Heart left ventricle (tissue), 16 donors: ENCODE measurements at regions of chr20 and their contacts with region 1.

Region 1: GRCh38 chr20:53413186-53413631 is 180.4 kb downstream of the ZNF217 start:
- DNase-seq: peak in 1 of 5 donors; percentile 66
- ATAC-seq: peak in 1 of 4 donors; percentile 11
- H3K4me3 ChIP-seq: no peak overlapping the region
- H3K27ac ChIP-seq: no peak overlapping the region
- H3K4me1 ChIP-seq: peaks cover 0 to 17% (median 6%) of the 10 kb centered on the region in 12 donors
- H3K27me3 ChIP-seq: no peaks in the 10 kb centered on the region
- CTCF ChIP-seq: peak in 2 of 12 donors; percentile 9 to 11
- POLR2A ChIP-seq: no peak

Region 2: GRCh38 chr20:52965380-52965779 is 447.8 kb before region 1 on chr20:
- intact Hi-C with region 1: loop called in 1 of 10 experiments (anchors 10 kb)
- DNase-seq: no peak
- ATAC-seq: no peak
- H3K4me3 ChIP-seq: no peak overlapping the region
- H3K27ac ChIP-seq: no peak overlapping the region
- H3K4me1 ChIP-seq: no peaks in the 10 kb centered on the region
- H3K27me3 ChIP-seq: peaks cover 0 to 7% (median 0%) of the 10 kb centered on the region in 9 donors
- CTCF ChIP-seq: no peak
- POLR2A ChIP-seq: no peak

Region 3: DNA sequence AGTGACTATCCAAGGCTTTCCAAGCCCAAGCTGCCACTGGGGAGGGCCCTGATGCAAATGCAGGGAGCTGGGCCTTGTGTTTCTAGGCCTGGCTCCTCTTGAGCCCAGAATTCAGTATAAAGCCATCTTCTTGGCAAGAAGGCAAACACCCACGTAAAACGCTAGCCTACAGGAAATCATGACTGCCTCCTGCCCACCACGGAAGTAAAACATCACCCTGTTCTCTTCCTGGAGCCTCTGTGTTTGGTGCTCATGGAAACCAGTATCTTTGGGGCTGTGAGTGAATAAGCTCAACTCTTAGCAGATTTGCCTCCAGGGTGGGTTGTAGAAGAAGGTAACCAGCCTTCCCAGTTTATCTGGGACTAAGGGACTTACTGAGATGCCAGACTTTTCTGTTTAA is 90.6 kb before region 1 on chr20:
- intact Hi-C with region 1: no loop called
- DNase-seq: no peak
- ATAC-seq: no peak
- H3K4me3 ChIP-seq: no peak overlapping the region
- H3K27ac ChIP-seq: no peak overlapping the region
- H3K4me1 ChIP-seq: no peaks in the 10 kb centered on the region
- H3K27me3 ChIP-seq: no peaks in the 10 kb centered on the region
- CTCF ChIP-seq: no peak
- POLR2A ChIP-seq: no peak

Region 4: DNA sequence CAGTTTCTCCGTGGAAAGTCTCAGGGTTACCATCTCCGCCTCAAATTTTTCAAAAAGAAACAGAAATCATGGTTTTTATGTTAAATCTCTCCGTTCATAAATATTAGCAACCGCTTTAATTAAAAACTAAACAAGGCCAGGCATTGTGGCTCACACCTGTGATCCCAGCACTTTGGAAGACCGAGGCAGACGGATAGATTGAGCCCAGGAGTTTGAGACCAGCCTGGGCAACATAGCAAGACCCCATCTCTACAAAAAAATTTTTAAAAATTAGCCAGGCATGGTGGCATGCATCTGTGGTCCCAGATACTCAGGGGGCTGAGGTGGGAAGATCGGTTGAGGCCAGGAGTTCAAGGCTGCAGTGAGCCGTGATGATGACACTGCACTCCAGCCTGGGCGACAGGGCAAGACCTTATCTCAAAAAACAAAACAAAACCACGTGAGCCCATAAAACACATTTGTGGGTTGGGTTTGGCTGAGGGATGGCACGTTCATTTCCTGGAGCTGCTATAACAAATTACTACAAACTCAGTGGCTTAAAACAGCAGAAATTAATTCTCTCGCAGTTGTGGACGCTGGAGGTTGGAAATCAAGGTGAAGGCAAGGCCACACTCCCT is 42.8 kb before region 1 on chr20:
- intact Hi-C with region 1: loop called in 1 of 10 experiments (anchors 5 kb)
- DNase-seq: no peak
- ATAC-seq: no peak
- H3K4me3 ChIP-seq: no peak overlapping the region
- H3K27ac ChIP-seq: no peak overlapping the region
- H3K4me1 ChIP-seq: peaks cover 0 to 4% (median 0%) of the 10 kb centered on the region in 12 donors
- H3K27me3 ChIP-seq: no peaks in the 10 kb centered on the region
- CTCF ChIP-seq: no peak
- POLR2A ChIP-seq: no peak

Region 5: DNA sequence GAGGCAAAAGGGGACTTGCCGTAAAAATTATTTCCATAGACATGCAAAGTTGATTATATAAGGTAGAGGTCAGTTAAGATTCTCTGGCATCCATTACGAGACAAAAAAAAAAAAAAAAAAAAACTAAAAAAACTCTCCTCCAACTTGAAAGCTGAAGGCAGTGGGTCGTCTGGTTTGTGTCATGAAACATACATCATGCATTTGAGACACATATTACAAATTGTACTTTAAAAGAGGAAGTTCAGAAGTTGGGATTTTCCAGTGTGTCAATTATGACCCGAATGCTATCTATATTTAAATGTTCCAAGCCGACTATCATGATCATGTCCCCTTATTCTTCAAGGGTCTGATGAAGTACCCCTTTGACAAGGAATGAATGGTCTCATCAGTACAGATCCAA is 55.4 kb after region 1 on chr20:
- intact Hi-C with region 1: loop called in 1 of 10 experiments (anchors 10 kb)
- DNase-seq: no peak
- ATAC-seq: no peak
- H3K4me3 ChIP-seq: no peak overlapping the region
- H3K27ac ChIP-seq: no peak overlapping the region
- H3K4me1 ChIP-seq: no peaks in the 10 kb centered on the region
- H3K27me3 ChIP-seq: no peaks in the 10 kb centered on the region
- CTCF ChIP-seq: no peak
- POLR2A ChIP-seq: no peak